ENCODE measurements at regions of chr20 and their contacts with region 1.

Region 1: DNA sequence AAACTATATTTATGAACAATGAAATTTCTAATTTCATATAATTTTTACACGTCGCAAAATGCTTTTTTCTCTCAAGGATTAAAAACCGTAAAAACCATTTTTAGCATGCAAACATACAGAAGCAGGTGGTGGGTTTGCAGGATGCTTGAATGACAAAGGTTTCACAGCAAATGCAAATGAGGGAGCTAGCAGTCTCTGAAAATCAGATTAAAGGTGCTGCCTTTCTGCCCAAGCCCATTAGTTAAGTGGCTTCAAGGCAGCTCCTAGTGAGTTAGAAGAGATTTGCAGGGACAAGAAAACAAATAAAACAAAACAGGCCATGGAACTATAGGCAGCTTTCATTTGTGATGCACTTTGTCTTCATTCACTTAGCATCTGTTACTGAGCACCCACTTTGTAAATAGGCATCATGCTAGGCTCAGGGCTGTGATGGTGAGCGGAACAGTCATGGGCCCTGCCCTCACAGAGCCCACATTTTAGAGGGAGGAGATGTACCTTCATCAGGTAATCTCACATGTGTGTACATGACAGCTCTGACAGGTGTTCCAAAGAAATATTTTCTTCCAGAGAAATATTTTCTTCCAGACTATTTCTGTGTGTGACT is 29.5 kb downstream of the NAPB start:
- DNase-seq: no peak
- H3K4me3 Mint-ChIP-seq: no peak overlapping the region
- H3K27ac Mint-ChIP-seq: no peak overlapping the region
- H3K4me1 Mint-ChIP-seq: no peaks in the 10 kb centered on the region
- H3K27me3 Mint-ChIP-seq: no peaks in the 10 kb centered on the region
- CTCF ChIP-seq: no peak

Region 2: DNA sequence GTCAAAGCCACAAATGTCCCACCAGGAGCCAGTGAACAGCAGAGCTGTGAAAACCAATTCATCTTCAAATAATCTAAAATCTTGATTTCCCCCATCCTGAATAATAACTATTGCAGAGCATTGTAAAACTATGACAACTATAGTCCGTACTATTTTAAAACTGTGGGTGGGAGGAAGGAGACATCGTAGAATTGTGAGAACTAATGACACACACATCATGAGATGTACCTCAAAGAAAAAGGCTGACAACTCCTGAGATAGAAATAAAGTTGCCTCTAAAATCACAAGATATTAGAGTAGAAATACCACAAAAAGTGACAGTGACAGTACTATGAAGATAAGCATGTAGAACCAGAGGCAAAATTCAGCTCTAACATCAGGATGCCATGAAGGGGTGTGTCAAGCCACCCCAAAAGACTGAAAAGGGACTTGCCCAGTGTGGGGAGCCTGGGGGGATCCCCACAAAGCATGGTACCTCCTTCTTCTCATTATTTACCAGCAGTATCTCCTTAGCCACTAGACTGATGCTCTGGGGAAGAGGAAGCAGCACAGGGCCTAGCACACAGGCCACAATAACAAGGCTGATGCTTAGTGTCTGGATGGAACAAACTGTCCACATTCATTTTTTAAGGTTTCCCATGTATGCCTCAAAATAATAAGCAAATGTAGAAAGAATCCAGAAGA is 16.1 kb after region 1 on chr20:
- CTCF ChIA-PET with region 1: interaction called, 13 read pairs
- POLR2A ChIA-PET with region 1: interaction called, 5 read pairs
- intact Hi-C with region 1: no loop called
- DNase-seq: no peak
- H3K4me3 Mint-ChIP-seq: no peak overlapping the region
- H3K27ac Mint-ChIP-seq: no peak overlapping the region
- H3K4me1 Mint-ChIP-seq: peaks cover 25% of the 10 kb centered on the region
- H3K27me3 Mint-ChIP-seq: no peaks in the 10 kb centered on the region
- CTCF ChIP-seq: no peak

Measured in MCF 10A (cell line).